Posterior cingulate gyrus (tissue), 11 donors: ENCODE measurements at regions of chr12 and their contacts with region 1.

Region 1: GRCh38 chr12:49347384-49348237 is 923 bp downstream of the DNAJC22 start:
- DNase-seq: peak; percentile 74 to 99 (median 88)

Region 2: DNA sequence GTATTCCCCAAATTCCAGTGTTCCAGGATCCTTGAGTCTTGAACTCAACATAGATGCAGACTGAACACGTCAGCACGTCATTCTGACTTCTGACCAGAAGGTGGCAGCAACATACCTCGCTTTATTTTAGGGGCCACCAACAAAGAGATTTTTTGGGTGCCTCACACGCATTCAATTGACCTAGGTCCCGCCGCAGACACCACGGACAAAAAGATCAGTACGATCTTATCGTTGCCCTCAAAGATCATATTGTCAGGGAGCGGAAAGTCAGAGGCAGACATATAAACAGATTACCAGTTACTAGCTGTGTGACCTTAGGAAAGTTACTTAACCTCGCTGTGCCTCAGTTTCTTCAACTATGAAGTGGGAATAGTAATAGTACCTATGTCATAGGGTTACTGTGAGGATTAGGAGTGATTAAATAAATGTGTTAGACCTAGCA is 59.2 kb before region 1 on chr12:
- intact Hi-C with region 1: loop called (anchors 5 kb)
- DNase-seq: peak in 8 of 10 donors; percentile 36 to 86 (median 64)

Region 3: DNA sequence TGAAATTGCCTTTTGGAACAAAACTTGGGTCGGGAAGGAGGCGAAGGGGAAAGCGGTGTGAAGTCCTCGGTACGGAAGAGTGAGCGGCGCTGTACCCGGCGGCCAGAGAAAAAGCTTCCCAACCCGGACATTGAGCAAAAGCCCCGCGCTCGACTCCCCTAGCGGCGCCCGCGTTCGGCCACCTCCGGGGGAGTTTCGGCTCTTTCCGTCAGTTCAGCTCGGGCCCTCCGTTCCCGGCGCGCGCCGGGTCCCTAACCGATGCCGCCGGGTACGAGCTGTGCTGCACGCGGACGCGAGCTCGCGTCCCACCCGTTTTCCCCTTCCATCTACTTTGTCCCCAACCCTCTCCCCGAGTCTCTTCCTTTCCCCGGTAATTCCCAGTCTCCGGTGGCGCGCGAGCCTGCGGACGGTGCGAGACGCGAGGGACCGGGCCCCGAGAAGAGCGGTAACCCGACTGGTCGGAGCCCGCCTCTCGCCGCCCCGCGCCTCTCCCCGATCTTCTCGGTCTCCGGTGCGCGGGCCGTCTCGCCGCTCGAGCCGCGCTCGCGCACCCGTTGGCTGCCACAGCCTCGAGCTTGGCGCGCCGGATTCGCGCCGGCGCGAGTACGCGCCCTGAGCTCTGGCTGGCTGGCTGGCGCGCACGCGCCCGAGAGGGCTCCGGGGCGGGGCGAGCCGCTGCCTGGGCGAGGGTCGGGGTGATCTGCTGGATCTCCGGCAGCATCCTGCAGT is 19.2 kb after region 1 on chr12:
- intact Hi-C with region 1: loop called (anchors 1 kb)
- DNase-seq: peak; percentile 76 to 97 (median 86)